K562 (cell line): ENCODE measurements at regions of chr11 and their contacts with region 1.

Region 1: DNA sequence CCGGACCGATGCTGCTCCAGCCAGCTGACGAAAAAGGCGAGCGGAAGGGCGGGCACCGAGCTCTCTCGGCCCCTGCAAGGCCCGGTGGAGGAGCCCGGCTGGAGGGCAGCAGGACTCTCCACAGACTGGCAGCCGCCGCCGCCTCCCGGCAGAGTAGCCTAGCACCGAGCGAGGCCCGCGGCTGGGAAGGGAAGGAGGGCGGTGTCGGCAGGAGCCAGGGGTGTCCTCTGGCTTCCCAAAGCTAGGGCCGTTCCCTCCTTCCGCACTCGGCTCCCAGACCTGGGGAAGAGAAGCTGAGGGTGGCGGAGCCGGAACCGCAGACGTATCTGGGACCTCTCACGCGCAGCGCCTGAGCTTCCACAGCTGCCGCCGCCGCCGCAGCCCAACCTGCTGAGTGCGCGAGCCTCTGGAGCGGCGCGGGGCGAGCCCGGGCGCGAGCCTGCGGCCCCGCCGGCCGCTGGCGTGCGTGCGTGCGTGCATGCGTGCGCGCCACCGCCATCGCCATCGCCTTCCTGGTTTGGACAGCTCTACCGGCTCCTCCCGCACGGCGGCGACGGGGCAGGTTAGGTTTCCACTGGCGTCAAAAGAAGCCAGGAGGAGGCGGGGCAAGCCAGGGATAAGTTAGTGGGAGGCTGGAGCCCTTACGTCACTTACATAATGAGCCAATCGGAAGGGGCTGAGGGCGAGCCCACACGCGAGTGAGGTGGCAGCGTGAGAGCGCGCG is at the start of gene RAB6A:
- DNase-seq: peak; percentile 97 to 100 (median 98)
- ATAC-seq: peak; percentile 94
- H3K4me3 ChIP-seq: peak within 1 kb of the TSS; percentile 97
- H3K27ac ChIP-seq: peak within 1 kb of the TSS; percentile 88
- H3K4me1 ChIP-seq: peaks cover 9 to 13% of the 10 kb centered on the region in 2 experiments; a peak in 2 of 5 replicates
- H3K27me3 ChIP-seq: no peaks in the 10 kb centered on the region
- CTCF ChIP-seq: peak; percentile 49 to 86 (median 62); a peak in 5 of 6 replicates
- EP300 ChIP-seq: peak; percentile 13; the same call in 1 of the 2 replicates
- POLR2A ChIP-seq: peak; percentile 62
- RAD21 ChIP-seq: peak; percentile 36 to 43
- polyA plus RNA-seq, gene RAB6A: 14.0 to 15.7 TPM

Region 2: GRCh38 chr11:73779084-73779902 is 18.5 kb after region 1 on chr11:
- CTCF ChIA-PET with region 1: no interaction called
- POLR2A ChIA-PET with region 1: interaction called, 86 read pairs
- in situ Hi-C with region 1: no loop called
- intact Hi-C with region 1: loop called (anchors 1 kb)
- DNase-seq: peak; percentile 97 to 99 (median 98)
- ATAC-seq: peak; percentile 98
- H3K4me3 ChIP-seq: peak overlapping the region; percentile 46
- H3K27ac ChIP-seq: peak overlapping the region; percentile 97
- H3K4me1 ChIP-seq: peaks cover 12 to 28% of the 10 kb centered on the region in 2 experiments; a peak in 4 of 5 replicates
- H3K27me3 ChIP-seq: no peaks in the 10 kb centered on the region
- CTCF ChIP-seq: peak in 1 of 3 experiments; percentile 11; a peak in 1 of 6 replicates
- EP300 ChIP-seq: peak; percentile 23
- POLR2A ChIP-seq: peak; percentile 88
- RAD21 ChIP-seq: no peak

Region 3: GRCh38 chr11:73787643-73788537 is 27.0 kb after region 1 on chr11 and contains the start of gene MRPL48:
- CTCF ChIA-PET with region 1: no interaction called
- POLR2A ChIA-PET with region 1: interaction called, 14 read pairs
- in situ Hi-C with region 1: no loop called
- intact Hi-C with region 1: loop called (anchors 2 kb)
- DNase-seq: peak; percentile 93 to 96 (median 94)
- ATAC-seq: peak; percentile 93
- H3K4me3 ChIP-seq: peak within 1 kb of the TSS; percentile 63
- H3K27ac ChIP-seq: peak within 1 kb of the TSS; percentile 95
- H3K4me1 ChIP-seq: peaks cover 16 to 38% of the 10 kb centered on the region in 2 experiments
- H3K27me3 ChIP-seq: no peaks in the 10 kb centered on the region
- CTCF ChIP-seq: no peak
- EP300 ChIP-seq: peak; percentile 5
- POLR2A ChIP-seq: peak; percentile 96
- RAD21 ChIP-seq: peak in 1 of 2 experiments; percentile 12; a peak in 1 of 4 replicates
- polyA plus RNA-seq, gene MRPL48: 216 to 237 TPM

Region 4: GRCh38 chr11:73876424-73877300 is 115.8 kb after region 1 on chr11 and contains the starts of genes COA4 and PAAF1:
- CTCF ChIA-PET with region 1: no interaction called
- POLR2A ChIA-PET with region 1: no interaction called
- in situ Hi-C with region 1: no loop called
- intact Hi-C with region 1: loop called (anchors 10 kb)
- DNase-seq: peak; percentile 94 to 98 (median 96)
- ATAC-seq: peak; percentile 96
- H3K4me3 ChIP-seq: peak within 1 kb of the TSS; percentile 67
- H3K27ac ChIP-seq: peak within 1 kb of the TSS; percentile 92
- H3K4me1 ChIP-seq: peaks cover 5 to 14% of the 10 kb centered on the region in 2 experiments; a peak in 4 of 5 replicates
- H3K27me3 ChIP-seq: no peaks in the 10 kb centered on the region
- CTCF ChIP-seq: no peak
- EP300 ChIP-seq: no peak
- POLR2A ChIP-seq: peak; percentile 94
- RAD21 ChIP-seq: no peak
- polyA plus RNA-seq, gene COA4: 108 to 152 TPM
- polyA plus RNA-seq, gene PAAF1: 69.2 to 78.6 TPM